Activated T-helper 2 cell treated with anti-CD3 and anti-CD28 coated beads, Interferon-gamma antibody, Interleukin-2, Interleukin-4, amounts not matched to agents 10 μg/mL and 5 μg/mL and 100 μg/mL, durations not matched to agents 14 hours and 24 hours and 36 hours (primary cell): ENCODE measurements at regions of chr14 and their contacts with region 1.

Region 1: DNA sequence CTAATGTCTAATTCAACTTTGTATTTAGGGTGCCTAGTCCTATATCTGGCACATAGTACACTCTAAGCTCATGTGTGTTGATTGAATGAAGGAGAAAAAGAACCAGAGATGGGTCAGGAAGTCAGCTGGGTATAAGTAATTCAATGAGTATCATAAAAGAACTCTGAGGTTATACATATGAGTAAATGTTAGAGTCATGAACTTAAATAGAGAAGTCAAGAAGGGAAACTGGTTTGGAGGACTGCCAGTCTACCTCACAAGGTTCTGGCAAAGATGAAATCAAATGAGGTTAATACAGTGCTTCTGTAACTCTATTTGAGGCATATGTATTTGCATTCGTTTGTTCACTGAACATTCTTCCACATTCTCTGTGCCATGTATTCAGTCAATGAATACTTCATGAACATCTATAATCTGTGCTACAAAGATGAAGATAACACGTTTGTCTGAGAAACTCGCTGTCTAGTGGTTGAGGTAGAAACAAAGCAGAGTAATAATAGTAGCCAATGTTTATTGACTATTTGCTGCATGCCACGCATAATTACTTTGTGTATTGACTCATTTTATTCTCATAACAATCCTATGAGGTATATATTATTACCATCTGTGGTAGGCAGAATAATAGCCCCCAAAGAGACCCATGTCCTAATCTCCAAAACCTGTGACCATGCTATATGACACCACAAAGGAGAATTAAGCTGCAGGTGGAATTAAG is 88.9 kb downstream of the PTGER2 start:
- DNase-seq: no peak
- H3K4me3 Mint-ChIP-seq: no peak overlapping the region
- H3K27ac Mint-ChIP-seq: peak overlapping the region; percentile 47
- H3K4me1 Mint-ChIP-seq: peaks cover 69% of the 10 kb centered on the region
- H3K27me3 Mint-ChIP-seq: no peaks in the 10 kb centered on the region

Region 2: DNA sequence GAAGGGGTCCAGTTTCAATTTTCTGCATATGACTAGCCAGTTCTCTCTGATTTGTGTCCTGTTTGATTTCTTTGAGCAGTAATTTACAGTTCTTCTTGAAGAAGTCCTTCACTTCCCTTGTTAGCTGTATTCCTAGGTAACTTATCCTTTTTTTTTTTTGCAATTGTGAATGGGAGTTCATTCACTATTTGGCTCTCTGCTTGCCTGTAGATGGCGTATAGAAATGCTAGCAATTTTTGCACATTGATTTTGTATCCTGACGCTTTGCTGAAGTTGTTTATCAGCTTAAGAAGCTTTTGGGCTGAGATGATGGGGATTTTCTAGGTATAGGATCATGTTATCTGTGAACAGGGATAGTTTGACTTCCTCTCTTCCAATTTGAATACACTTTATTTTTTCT is 256.5 kb before region 1 on chr14:
- intact Hi-C with region 1: no loop called
- DNase-seq: no peak
- H3K4me3 Mint-ChIP-seq: no peak overlapping the region
- H3K27ac Mint-ChIP-seq: no peak overlapping the region
- H3K4me1 Mint-ChIP-seq: peaks cover 4% of the 10 kb centered on the region
- H3K27me3 Mint-ChIP-seq: peaks cover 33% of the 10 kb centered on the region

Region 3: DNA sequence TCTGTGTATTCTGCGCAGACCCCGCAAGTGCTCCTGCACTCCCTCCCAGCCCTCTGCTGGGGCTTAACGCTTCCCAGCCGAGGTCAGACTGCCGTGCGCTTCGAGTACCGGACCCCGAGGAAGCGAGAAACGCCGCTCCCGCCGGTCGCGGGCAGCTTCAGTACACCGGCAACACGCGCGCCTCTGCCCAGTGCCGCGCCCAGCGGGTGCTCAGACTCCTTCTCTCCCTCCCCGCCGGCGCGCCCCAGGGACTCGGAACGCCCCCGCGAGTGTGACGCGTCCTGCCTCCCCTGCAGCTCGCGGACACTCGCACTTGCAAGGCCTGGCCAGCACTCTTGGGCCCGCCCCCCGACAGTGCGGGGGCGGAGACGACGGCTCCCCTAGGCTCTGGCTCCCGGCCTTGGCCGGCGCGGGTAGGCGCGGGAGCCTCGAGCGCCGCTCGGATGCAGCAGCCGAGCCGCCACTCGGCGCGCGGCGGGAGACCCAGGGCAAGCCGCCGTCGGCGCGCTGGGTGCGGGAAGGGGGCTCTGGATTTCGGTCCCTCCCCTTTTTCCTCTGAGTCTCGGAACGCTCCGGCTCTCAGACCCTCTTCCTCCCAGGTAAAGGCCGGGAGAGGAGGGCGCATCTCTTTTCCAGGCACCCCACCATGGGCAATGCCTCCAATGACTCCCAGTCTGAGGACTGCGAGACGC is 88.9 kb before region 1 on chr14 and contains the start of gene PTGER2:
- intact Hi-C with region 1: loop called (anchors 1 kb)
- DNase-seq: peak; percentile 87
- H3K4me3 Mint-ChIP-seq: peak within 1 kb of the TSS; percentile 100
- H3K27ac Mint-ChIP-seq: peak within 1 kb of the TSS; percentile 98
- H3K4me1 Mint-ChIP-seq: peaks cover 59% of the 10 kb centered on the region
- H3K27me3 Mint-ChIP-seq: no peaks in the 10 kb centered on the region
- total RNA-seq, gene PTGER2: 53.3 and 54.1 TPM in 2 replicates

Region 4: DNA sequence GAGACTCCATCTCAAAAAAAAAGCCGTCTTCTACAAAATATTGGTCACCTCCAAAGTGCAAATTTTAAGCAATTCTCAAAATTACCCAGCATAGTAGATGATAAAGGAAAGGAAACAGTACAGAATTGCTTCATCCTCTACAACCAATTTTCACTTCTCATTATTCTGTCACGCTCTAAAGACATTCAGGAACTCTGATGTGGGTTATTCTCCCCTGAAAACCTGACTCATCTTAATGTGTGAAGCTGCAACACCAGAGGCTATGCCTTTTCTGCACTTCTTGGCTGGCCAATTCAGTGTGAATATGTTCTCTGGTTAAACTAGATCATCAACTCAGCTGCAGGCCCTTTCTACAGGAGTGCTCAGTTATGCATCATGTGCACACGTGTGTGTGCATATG is 77.8 kb before region 1 on chr14:
- intact Hi-C with region 1: loop called (anchors 1 kb)
- DNase-seq: no peak
- H3K4me3 Mint-ChIP-seq: peak overlapping the region; percentile 37
- H3K27ac Mint-ChIP-seq: peak overlapping the region; percentile 73
- H3K4me1 Mint-ChIP-seq: peaks cover 81% of the 10 kb centered on the region
- H3K27me3 Mint-ChIP-seq: no peaks in the 10 kb centered on the region

Region 5: GRCh38 chr14:52380294-52380693 is 22.7 kb before region 1 on chr14:
- intact Hi-C with region 1: loop called (anchors 2 kb)
- DNase-seq: no peak
- H3K4me3 Mint-ChIP-seq: no peak overlapping the region
- H3K27ac Mint-ChIP-seq: no peak overlapping the region
- H3K4me1 Mint-ChIP-seq: peaks cover 26% of the 10 kb centered on the region
- H3K27me3 Mint-ChIP-seq: peaks cover 1% of the 10 kb centered on the region

Region 6: DNA sequence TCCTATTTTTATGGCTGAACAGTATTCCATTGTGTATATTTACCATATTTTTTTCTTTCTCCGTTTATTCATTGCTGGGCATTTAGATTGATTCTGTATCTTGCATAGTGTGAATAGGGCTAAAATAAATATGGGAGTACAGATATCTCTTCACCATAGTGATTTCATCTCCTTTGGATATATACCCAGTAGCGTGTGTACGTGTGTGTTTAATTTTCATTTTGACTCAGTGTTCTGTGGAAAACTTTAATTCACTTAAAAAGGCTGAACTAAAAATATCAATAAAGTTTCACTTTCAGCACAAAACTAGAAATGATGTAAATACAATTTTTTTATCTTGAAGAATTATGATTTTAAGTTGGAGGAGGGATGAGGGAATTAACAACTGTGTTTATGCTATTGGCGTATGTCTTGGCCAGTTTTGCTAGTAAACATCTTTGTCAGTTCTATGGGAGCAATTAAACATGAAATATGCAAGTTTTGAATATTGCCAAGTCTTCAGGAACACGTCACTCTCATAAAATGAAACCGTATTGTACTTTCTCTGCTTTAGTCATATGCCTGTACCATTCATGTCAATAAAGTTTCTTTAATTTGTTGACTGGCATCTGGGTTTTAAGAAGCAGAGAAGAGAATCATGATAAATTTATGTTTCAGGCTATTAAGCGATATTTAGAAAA is 10.9 kb after region 1 on chr14:
- intact Hi-C with region 1: loop called (anchors 1 kb)
- DNase-seq: no peak
- H3K4me3 Mint-ChIP-seq: peak overlapping the region; percentile 67
- H3K27ac Mint-ChIP-seq: peak overlapping the region; percentile 97
- H3K4me1 Mint-ChIP-seq: peaks cover 66% of the 10 kb centered on the region
- H3K27me3 Mint-ChIP-seq: no peaks in the 10 kb centered on the region

Region 7: DNA sequence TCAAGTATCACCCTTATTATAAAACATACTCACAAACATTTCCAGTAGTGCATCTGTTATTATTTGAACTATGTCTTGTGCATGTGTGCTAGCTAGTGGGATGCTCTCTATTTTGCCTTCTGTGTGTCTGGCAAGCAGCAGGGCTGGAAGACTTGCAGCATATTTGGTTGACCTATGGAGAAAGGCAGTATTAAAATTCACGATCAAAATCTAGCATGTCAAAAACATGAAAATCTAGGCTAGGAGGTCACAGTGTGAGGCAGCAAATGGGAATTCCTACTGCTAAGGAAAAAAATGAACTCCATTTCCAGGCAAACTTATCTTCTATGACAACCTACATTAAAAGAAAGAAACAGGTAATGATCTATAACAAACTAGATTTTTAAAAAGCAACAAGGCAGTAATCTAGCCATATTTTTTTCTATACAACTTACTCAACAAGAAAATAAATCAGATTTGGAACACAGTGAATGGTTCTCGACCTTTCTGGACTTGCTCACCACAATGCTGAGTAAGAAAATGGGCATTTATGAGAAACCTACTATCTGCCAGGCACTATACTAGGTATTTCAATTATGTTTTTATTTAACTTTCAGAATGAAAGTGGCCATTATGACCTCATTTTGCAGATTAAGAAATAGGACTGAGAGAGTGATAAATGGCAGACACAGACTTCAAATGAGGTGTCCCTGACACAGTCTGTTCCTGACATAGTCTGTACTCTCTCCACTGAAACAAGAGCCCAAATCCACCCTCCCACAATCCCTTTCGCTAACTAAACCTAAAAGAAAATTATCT is 52.5 kb after region 1 on chr14:
- intact Hi-C with region 1: loop called (anchors 2 kb)
- DNase-seq: no peak
- H3K4me3 Mint-ChIP-seq: no peak overlapping the region
- H3K27ac Mint-ChIP-seq: no peak overlapping the region
- H3K4me1 Mint-ChIP-seq: peaks cover 19% of the 10 kb centered on the region
- H3K27me3 Mint-ChIP-seq: no peaks in the 10 kb centered on the region

Region 8: GRCh38 chr14:52467515-52468266 is 64.7 kb after region 1 on chr14:
- intact Hi-C with region 1: loop called (anchors 2 kb)
- DNase-seq: no peak
- H3K4me3 Mint-ChIP-seq: no peak overlapping the region
- H3K27ac Mint-ChIP-seq: peak overlapping the region; percentile 61
- H3K4me1 Mint-ChIP-seq: peaks cover 33% of the 10 kb centered on the region
- H3K27me3 Mint-ChIP-seq: no peaks in the 10 kb centered on the region